Posterior cingulate gyrus (tissue), 11 donors: ENCODE measurements at regions of chr16 and their contacts with region 1.

Region 1: GRCh38 chr16:66406534-66407221 is 20.4 kb upstream of the BEAN1 start:
- DNase-seq: peak; percentile 74 to 97 (median 92)

Region 2: GRCh38 chr16:66462912-66463311 is 56.2 kb after region 1 on chr16:
- intact Hi-C with region 1: no loop called
- DNase-seq: no peak

Region 3: DNA sequence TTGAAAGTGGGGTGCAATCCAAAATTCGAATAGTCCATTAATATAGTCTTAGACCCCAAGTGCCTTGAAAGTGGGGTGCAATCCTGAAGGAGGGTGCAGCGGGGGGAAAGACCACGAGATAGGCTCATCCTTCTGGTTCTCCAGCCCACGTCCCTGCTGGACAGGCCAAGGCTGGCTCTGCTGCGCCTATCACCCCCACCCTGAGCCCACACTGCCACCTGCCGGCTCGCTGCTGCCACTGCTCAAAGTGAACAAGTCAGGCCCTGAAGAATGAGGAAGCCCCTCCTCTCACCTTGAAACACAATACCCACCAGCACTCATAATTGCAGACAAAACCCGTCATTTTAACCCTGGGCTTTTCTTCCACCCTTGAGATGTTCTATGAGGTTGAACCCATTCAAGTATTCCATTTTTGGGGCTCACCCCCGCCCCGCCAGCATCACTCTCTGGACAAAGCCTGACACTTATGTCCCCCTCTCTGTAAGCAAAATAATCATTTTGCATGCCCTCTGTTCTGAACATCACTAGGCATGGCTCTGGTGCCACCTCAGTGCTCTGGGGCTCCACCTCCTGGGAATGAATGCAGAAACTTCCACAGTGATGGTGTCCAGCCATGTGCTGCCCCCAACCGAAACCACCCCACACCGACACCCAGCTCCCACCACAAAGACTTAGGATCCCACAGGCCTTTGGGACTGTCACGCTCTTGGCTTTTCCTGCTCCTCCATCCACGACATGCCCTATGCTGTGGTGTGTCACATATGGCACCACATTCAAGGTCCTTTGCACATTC is 77.2 kb after region 1 on chr16:
- intact Hi-C with region 1: loop called (anchors 1 kb)
- DNase-seq: peak; percentile 61 to 97 (median 82)

Region 4: GRCh38 chr16:66588981-66589713 is 182.5 kb after region 1 on chr16:
- intact Hi-C with region 1: loop called (anchors 2 kb)
- DNase-seq: peak in 6 of 10 donors; percentile 15 to 89 (median 42)

Region 5: GRCh38 chr16:66608241-66609138 is 201.8 kb after region 1 on chr16:
- intact Hi-C with region 1: loop called (anchors 5 kb)
- DNase-seq: peak; percentile 59 to 97 (median 87)

Region 6: GRCh38 chr16:67312719-67313275 is 906.1 kb after region 1 on chr16:
- intact Hi-C with region 1: no loop called
- DNase-seq: no peak

Region 7: GRCh38 chr16:67499106-67499505 is 1092.4 kb after region 1 on chr16:
- intact Hi-C with region 1: no loop called
- DNase-seq: no peak